BJ (cell line): ENCODE measurements at regions of chr9 and their contacts with region 1.

Region 1: DNA sequence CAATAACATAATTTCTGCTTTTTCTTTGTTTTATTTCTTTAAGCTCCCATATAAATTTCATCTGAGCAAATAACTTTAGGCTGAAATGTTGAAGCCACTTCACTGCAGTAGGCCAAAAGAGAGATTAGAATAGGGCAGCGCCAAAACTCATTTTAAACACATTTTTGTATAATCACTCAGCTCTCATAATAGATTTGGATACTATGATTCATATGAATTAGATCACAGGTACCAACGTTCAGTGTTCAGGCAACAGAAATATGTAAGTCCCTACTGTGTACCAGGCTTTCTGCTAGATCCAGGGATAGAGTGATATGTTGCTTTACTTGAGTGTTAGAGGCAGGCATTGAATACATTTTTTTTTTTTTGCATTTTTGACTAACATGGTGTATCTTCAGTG is 370.5 kb downstream of the PTPRD start:
- DNase-seq: no peak
- H3K4me3 ChIP-seq: no peak overlapping the region
- H3K27me3 ChIP-seq: no peaks in the 10 kb centered on the region
- CTCF ChIP-seq: no peak

Region 2: GRCh38 chr9:10148796-10149195 is 93.5 kb before region 1 on chr9:
- CTCF ChIA-PET with region 1: no interaction called
- POLR2A ChIA-PET with region 1: interaction called, 12 read pairs
- DNase-seq: no peak
- H3K4me3 ChIP-seq: no peak overlapping the region
- H3K27me3 ChIP-seq: no peaks in the 10 kb centered on the region
- CTCF ChIP-seq: no peak

Region 3: GRCh38 chr9:10396615-10397014 is 154.4 kb after region 1 on chr9:
- CTCF ChIA-PET with region 1: no interaction called
- POLR2A ChIA-PET with region 1: no interaction called
- DNase-seq: no peak
- H3K4me3 ChIP-seq: no peak overlapping the region
- H3K27me3 ChIP-seq: no peaks in the 10 kb centered on the region
- CTCF ChIP-seq: no peak